A673 (cell line): ENCODE measurements at regions of chrX and their contacts with region 1.

Region 1: DNA sequence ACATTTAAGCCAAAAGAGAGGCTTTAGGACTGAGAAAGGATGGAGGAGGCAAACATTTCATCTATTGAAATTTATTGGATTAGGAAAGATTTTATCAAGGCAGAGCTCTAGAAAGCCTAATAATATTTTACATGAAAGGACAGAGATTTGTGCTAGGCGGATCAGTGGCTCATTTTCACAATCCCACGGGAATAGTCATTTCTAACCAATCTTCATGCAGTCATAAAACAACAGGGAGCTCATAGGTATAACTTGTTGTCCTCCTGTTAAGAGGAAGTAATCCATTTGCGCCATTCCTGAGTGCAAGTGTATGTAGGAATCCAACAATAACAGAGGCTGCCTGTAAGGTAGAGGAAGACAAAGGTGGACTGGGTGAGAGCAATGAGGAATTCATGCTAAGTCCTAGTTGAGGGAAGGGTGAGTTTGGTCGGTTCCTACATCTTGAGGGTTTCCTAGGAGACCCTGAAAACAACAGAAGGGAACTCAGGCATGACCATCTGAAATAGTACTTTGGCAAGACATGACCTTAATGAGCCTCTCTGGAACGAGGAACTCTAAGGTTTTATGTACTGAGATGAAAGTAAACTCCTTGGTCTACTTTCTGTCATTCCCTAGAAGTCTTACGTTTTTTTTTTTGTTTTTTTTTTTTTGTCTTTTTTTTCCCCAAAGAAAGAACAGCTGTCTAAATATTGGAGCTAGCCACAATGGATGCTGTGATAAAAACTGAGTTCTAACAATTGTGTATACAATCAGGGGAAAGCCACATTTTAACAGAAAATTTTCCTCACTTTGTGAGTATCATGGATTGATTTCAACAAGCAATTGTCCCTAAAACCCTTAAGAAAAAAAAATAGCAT is 89.7 kb downstream of the GEMIN8 start:
- DNase-seq: no peak
- H3K4me3 ChIP-seq: no peak overlapping the region
- H3K27ac ChIP-seq: no peak overlapping the region
- H3K4me1 ChIP-seq: no peaks in the 10 kb centered on the region
- H3K27me3 ChIP-seq: peaks cover 56% of the 10 kb centered on the region
- CTCF ChIP-seq: no peak

Region 2: GRCh38 chrX:14084466-14084865 is 144.5 kb after region 1 on chrX:
- CTCF ChIA-PET with region 1: no interaction called
- POLR2A ChIA-PET with region 1: interaction called, 10 read pairs
- intact Hi-C with region 1: no loop called
- DNase-seq: no peak
- H3K4me3 ChIP-seq: no peak overlapping the region
- H3K27ac ChIP-seq: no peak overlapping the region
- H3K4me1 ChIP-seq: no peaks in the 10 kb centered on the region
- H3K27me3 ChIP-seq: peaks cover 20% of the 10 kb centered on the region
- CTCF ChIP-seq: no peak